ENCODE measurements at regions of chr1 and their contacts with region 1.

Region 1: DNA sequence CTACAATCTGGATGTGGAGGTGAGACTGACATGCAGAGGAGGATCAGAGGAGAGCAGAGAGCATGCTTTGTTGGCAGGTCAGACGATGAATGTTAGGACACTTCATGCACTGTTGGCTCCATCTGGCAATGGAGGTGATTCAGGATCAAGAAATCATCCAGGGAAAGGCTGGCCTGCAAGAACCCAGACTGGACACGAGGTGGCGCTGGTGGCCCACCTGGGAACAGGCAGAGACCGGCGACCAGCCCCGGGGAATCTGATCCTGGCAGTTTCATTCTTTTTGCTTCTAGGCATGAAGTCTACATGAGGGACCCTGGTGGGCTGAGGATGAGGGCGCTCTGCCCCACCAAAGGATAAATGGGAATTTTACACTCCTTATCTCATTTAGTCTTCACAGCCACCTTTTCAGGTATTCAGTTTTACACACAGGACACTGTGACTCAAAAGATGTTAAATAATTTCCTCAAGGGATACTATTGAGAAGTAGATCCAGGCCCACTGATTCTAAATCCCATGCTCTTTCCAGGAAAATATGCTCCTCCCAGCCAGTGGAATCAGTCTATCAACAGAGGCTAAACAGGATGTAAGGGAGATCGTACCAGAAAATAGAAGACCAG is 26.2 kb upstream of the SCMH1 start:
- DNase-seq: no peak
- H3K4me3 ChIP-seq: no peak overlapping the region
- H3K27ac ChIP-seq: no peak overlapping the region
- H3K4me1 ChIP-seq: peaks cover 0 to 7% (median 0%) of the 10 kb centered on the region in 3 donors
- H3K27me3 ChIP-seq: peaks cover 0 to 4% (median 0%) of the 10 kb centered on the region in 4 donors
- CTCF ChIP-seq: peak; percentile 90 to 99 (median 97)
- POLR2A ChIP-seq: no peak

Region 2: GRCh38 chr1:41151846-41152245 is 116.4 kb before region 1 on chr1:
- intact Hi-C with region 1: no loop called
- DNase-seq: no peak
- H3K4me3 ChIP-seq: no peak overlapping the region
- H3K27ac ChIP-seq: peak overlapping the region in 3 of 4 donors; percentile 6 to 69 (median 27)
- H3K4me1 ChIP-seq: peaks cover 9 to 24% (median 10%) of the 10 kb centered on the region in 3 donors
- H3K27me3 ChIP-seq: no peaks in the 10 kb centered on the region
- CTCF ChIP-seq: no peak
- POLR2A ChIP-seq: no peak

Region 3: GRCh38 chr1:41416552-41417334 is 148.5 kb after region 1 on chr1:
- intact Hi-C with region 1: loop called (anchors 5 kb)
- DNase-seq: no peak
- H3K4me3 ChIP-seq: no peak overlapping the region
- H3K27ac ChIP-seq: peak overlapping the region in 1 of 4 donors; percentile 90
- H3K4me1 ChIP-seq: peaks cover 4 to 63% (median 19%) of the 10 kb centered on the region in 3 donors
- H3K27me3 ChIP-seq: no peaks in the 10 kb centered on the region
- CTCF ChIP-seq: peak; percentile 63 to 92 (median 90)
- POLR2A ChIP-seq: no peak

Region 4: GRCh38 chr1:41432481-41433280 is 164.4 kb after region 1 on chr1:
- intact Hi-C with region 1: loop called (anchors 5 kb)
- DNase-seq: peak; percentile 7
- H3K4me3 ChIP-seq: peak overlapping the region in 1 of 4 donors; percentile 8
- H3K27ac ChIP-seq: peak overlapping the region; percentile 24 to 62 (median 46)
- H3K4me1 ChIP-seq: peaks cover 17 to 22% (median 18%) of the 10 kb centered on the region in 3 donors
- H3K27me3 ChIP-seq: peaks cover 0 to 31% (median 0%) of the 10 kb centered on the region in 4 donors
- CTCF ChIP-seq: peak; percentile 77 to 97 (median 93)
- POLR2A ChIP-seq: no peak

Measured in esophagus squamous epithelium (tissue), 5 donors.